B cell (primary cell): ENCODE measurements at regions of chr10 and their contacts with region 1.

Region 1: DNA sequence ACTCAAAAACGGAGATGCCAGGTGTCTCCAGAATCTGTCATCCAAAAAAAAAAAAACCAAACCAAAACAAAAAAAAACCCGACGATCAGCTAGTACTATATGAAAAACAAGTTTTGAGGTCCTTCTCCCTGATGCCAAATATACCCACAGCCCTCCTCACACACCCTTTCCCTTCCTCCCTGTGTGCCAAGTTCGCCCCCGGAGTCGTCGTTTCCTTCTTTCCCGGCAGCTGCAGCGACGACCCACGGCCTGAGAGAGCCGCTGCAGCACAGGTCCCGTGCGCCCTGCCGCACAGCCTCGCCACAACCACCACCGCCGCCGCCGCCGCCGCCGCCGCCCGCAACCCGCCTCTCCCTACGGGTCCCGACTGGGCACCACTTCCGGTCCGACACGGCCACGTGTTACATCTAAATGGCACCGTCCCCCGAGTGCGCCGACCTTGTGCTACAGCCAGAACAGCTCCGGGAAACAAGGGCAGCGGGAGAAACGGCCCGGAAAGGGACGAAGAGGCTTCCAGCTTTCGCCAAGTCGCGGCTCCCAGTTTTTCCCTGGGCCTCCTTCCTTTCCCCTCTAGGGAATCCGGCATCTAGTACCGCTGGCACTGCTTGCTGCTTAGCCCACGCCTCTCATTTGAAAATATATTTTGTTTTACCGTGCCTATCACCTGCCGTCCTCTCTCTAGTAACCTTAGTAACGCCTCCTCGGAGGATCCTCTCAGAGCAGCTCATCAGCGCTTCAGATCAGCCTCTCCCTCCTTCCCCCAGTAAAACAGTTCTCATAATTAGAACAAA is at the start of gene FRA10AC1:
- DNase-seq: peak; percentile 95
- ATAC-seq: peak; percentile 86
- H3K4me3 ChIP-seq: peak within 1 kb of the TSS; percentile 79 to 98 (median 91)
- H3K4me3 Mint-ChIP-seq: no peak within 1 kb of the TSS
- H3K27ac ChIP-seq: peak within 1 kb of the TSS; percentile 64 to 92
- H3K27ac Mint-ChIP-seq: no peak within 1 kb of the TSS
- H3K4me1 ChIP-seq: peaks cover 11% of the 10 kb centered on the region in 2 donors
- H3K4me1 Mint-ChIP-seq: peaks cover 9% of the 10 kb centered on the region
- H3K27me3 ChIP-seq: no peaks in the 10 kb centered on the region
- H3K27me3 Mint-ChIP-seq: no peaks in the 10 kb centered on the region
- CTCF ChIP-seq: no peak
- total RNA-seq, gene FRA10AC1: 29.7 and 31.2 TPM in 2 replicates

Region 2: DNA sequence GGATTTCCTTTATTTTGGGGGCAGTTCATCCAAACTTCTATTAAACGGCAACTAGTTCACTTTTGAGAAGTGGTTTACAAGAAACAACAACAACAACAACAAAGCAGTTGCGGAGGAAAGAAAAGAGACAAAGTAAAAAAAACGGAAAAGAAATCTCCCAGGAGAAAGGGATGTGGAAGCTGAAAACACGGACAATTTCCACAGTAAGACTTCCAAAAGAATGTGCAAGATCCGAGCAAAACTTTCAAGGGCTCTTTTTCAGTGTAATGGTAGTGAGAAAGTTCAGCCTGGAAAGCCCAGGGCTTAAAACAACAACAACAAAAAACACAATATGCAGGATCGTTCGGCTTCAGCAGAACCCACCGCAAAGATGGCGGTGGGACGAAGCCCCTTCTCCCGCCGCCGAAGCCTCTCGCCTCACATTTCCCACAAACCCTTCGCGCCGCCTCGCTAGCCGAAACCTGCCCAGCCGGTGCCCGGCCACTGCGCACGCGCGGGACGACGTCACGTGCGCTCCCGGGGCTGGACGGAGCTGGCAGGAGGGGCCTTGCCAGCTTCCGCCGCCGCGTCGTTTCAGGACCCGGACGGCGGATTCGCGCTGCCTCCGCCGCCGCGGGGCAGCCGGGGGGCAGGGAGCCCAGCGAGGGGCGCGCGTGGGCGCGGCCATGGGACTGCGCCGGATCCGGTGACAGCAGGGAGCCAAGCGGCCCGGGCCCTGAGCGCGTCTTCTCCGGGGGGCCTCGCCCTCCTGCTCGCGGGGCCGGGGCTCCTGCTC is 1904.3 kb before region 1 on chr10 and contains the start of gene TNKS2:
- CTCF ChIA-PET with region 1: no interaction called
- POLR2A ChIA-PET with region 1: no interaction called
- intact Hi-C with region 1: loop called (anchors 5 kb)
- DNase-seq: peak; percentile 96
- ATAC-seq: peak; percentile 75
- H3K4me3 ChIP-seq: peak within 1 kb of the TSS; percentile 77 to 91 (median 83)
- H3K4me3 Mint-ChIP-seq: peak within 1 kb of the TSS; percentile 97
- H3K27ac ChIP-seq: peak within 1 kb of the TSS; percentile 91 to 97
- H3K27ac Mint-ChIP-seq: peak within 1 kb of the TSS; percentile 99
- H3K4me1 ChIP-seq: peaks cover 34 to 36% of the 10 kb centered on the region in 2 donors
- H3K4me1 Mint-ChIP-seq: peaks cover 62% of the 10 kb centered on the region
- H3K27me3 ChIP-seq: no peaks in the 10 kb centered on the region
- H3K27me3 Mint-ChIP-seq: no peaks in the 10 kb centered on the region
- CTCF ChIP-seq: no peak
- total RNA-seq, gene TNKS2: 45.8 and 48.1 TPM in 2 replicates

Region 3: DNA sequence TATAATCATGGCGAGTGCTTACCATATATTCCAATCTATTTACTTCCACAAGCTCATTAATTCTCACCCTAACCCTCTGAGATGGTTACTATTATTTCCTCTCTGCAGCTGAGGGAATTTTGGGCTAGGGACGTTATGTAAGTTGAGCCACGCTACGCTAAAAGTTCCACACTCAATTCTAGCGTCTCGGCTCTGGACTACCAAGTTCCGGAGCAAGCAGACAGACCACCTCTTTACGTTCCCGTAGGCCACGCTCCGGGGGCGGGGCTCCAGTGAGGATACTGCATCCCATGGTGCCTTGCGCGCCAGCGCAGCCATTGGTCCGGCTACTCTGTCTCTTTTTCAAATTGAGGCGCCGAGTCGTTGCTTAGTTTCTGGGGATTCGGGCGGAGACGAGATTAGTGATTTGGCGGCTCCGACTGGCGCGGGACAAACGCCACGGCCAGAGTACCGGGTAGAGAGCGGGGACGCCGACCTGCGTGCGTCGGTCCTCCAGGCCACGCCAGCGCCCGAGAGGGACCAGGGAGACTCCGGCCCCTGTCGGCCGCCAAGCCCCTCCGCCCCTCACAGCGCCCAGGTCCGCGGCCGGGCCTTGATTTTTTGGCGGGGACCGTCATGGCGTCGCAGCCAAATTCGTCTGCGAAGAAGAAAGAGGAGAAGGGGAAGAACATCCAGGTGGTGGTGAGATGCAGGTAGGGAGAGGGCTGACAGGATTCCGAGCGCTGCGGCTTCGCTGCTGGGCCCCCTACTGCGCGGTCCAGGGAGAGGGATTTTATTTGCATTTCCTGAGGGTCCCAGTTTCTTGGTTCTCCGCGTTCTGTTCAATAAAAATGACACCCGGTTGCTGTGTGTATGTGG is 1109.4 kb before region 1 on chr10 and contains the start of gene KIF11:
- CTCF ChIA-PET with region 1: no interaction called
- POLR2A ChIA-PET with region 1: no interaction called
- intact Hi-C with region 1: loop called (anchors 5 kb)
- DNase-seq: peak; percentile 96
- ATAC-seq: peak; percentile 82
- H3K4me3 ChIP-seq: peak within 1 kb of the TSS; percentile 65 to 95 (median 84)
- H3K4me3 Mint-ChIP-seq: peak within 1 kb of the TSS; percentile 99
- H3K27ac ChIP-seq: peak within 1 kb of the TSS; percentile 82 to 92
- H3K27ac Mint-ChIP-seq: peak within 1 kb of the TSS; percentile 99
- H3K4me1 ChIP-seq: peaks cover 9 to 22% of the 10 kb centered on the region in 2 donors
- H3K4me1 Mint-ChIP-seq: peaks cover 41% of the 10 kb centered on the region
- H3K27me3 ChIP-seq: no peaks in the 10 kb centered on the region
- H3K27me3 Mint-ChIP-seq: no peaks in the 10 kb centered on the region
- CTCF ChIP-seq: no peak
- total RNA-seq, gene KIF11: 1.8 and 2.0 TPM in 2 replicates

Region 4: GRCh38 chr10:93745408-93746065 is 43.1 kb after region 1 on chr10:
- CTCF ChIA-PET with region 1: interaction called, 11 read pairs
- POLR2A ChIA-PET with region 1: interaction called, 3 read pairs
- intact Hi-C with region 1: loop called (anchors 2 kb)
- DNase-seq: no peak
- ATAC-seq: no peak
- H3K4me3 ChIP-seq: no peak overlapping the region
- H3K4me3 Mint-ChIP-seq: no peak overlapping the region
- H3K27ac ChIP-seq: no peak overlapping the region
- H3K27ac Mint-ChIP-seq: no peak overlapping the region
- H3K4me1 ChIP-seq: peaks cover 8 to 18% of the 10 kb centered on the region in 2 donors
- H3K4me1 Mint-ChIP-seq: peaks cover 21% of the 10 kb centered on the region
- H3K27me3 ChIP-seq: no peaks in the 10 kb centered on the region
- H3K27me3 Mint-ChIP-seq: peaks cover 4% of the 10 kb centered on the region
- CTCF ChIP-seq: no peak

Region 5: GRCh38 chr10:93816123-93816747 is 113.8 kb after region 1 on chr10:
- CTCF ChIA-PET with region 1: interaction called, 40 read pairs
- POLR2A ChIA-PET with region 1: interaction called, 4 read pairs
- intact Hi-C with region 1: loop called (anchors 1 kb)
- DNase-seq: peak; percentile 51
- ATAC-seq: no peak
- H3K4me3 ChIP-seq: no peak overlapping the region
- H3K4me3 Mint-ChIP-seq: no peak overlapping the region
- H3K27ac ChIP-seq: no peak overlapping the region
- H3K27ac Mint-ChIP-seq: no peak overlapping the region
- H3K4me1 ChIP-seq: no peaks in the 10 kb centered on the region
- H3K4me1 Mint-ChIP-seq: no peaks in the 10 kb centered on the region
- H3K27me3 ChIP-seq: peaks cover 0 to 21% (median 5%) of the 10 kb centered on the region in 4 experiments
- H3K27me3 Mint-ChIP-seq: peaks cover 63% of the 10 kb centered on the region
- CTCF ChIP-seq: peak; percentile 67

Region 6: DNA sequence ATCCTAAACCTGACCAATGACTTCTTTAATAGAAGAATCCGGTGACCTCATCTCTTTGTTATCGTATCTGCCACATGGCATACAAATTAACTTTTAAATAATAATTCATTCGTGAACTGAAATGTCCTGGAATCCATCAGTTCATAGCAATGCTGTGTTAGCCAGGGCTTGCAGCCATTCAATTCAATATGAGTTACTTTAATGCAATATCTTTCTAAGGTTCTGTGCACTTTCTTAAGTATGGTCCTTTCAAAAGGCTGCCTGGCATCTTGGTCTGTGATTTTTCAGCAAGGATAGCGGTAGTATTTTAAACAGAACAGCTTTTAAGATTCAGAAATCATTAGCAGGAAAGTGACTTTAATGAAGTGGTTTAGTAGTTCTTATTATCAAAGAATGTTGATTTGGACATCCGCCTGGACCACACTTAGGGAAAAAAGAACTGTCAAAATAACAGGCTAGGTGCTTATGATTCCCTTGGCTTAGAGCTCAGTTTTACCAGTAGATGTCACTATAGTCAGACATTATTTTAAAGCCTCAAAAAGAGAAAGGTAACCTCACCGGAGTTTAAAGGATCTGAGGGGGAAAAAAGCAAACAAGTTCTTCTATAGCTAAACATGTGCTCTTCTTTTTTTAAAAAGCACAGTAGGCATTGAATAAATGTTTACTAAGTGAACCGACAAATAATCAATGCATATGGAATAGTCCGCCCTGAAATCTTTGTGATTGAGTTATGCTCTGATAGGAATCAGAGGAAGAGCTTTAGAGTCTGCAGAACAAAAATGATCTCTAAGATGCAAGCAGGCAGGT is 214.1 kb after region 1 on chr10:
- CTCF ChIA-PET with region 1: no interaction called
- POLR2A ChIA-PET with region 1: no interaction called
- intact Hi-C with region 1: no loop called
- DNase-seq: no peak
- ATAC-seq: no peak
- H3K4me3 ChIP-seq: no peak overlapping the region
- H3K4me3 Mint-ChIP-seq: no peak overlapping the region
- H3K27ac ChIP-seq: no peak overlapping the region
- H3K27ac Mint-ChIP-seq: no peak overlapping the region
- H3K4me1 ChIP-seq: no peaks in the 10 kb centered on the region
- H3K4me1 Mint-ChIP-seq: no peaks in the 10 kb centered on the region
- H3K27me3 ChIP-seq: no peaks in the 10 kb centered on the region
- H3K27me3 Mint-ChIP-seq: no peaks in the 10 kb centered on the region
- CTCF ChIP-seq: peak; percentile 9

Region 7: GRCh38 chr10:94320285-94320914 is 618.0 kb after region 1 on chr10:
- CTCF ChIA-PET with region 1: interaction called, 12 read pairs
- POLR2A ChIA-PET with region 1: no interaction called
- intact Hi-C with region 1: no loop called
- DNase-seq: peak; percentile 65
- ATAC-seq: no peak
- H3K4me3 ChIP-seq: no peak overlapping the region
- H3K4me3 Mint-ChIP-seq: no peak overlapping the region
- H3K27ac ChIP-seq: no peak overlapping the region
- H3K27ac Mint-ChIP-seq: no peak overlapping the region
- H3K4me1 ChIP-seq: no peaks in the 10 kb centered on the region
- H3K4me1 Mint-ChIP-seq: no peaks in the 10 kb centered on the region
- H3K27me3 ChIP-seq: no peaks in the 10 kb centered on the region
- H3K27me3 Mint-ChIP-seq: no peaks in the 10 kb centered on the region
- CTCF ChIP-seq: peak; percentile 96

Region 8: GRCh38 chr10:94545391-94546048 is 843.1 kb after region 1 on chr10 and contains the start of gene HELLS:
- CTCF ChIA-PET with region 1: no interaction called
- POLR2A ChIA-PET with region 1: no interaction called
- intact Hi-C with region 1: loop called (anchors 10 kb)
- DNase-seq: peak; percentile 84
- ATAC-seq: peak; percentile 79
- H3K4me3 ChIP-seq: peak within 1 kb of the TSS; percentile 57 to 99 (median 95)
- H3K4me3 Mint-ChIP-seq: peak within 1 kb of the TSS; percentile 94
- H3K27ac ChIP-seq: peak within 1 kb of the TSS; percentile 50 to 71
- H3K27ac Mint-ChIP-seq: peak within 1 kb of the TSS; percentile 86
- H3K4me1 ChIP-seq: peaks cover 14 to 18% of the 10 kb centered on the region in 2 donors
- H3K4me1 Mint-ChIP-seq: peaks cover 22% of the 10 kb centered on the region
- H3K27me3 ChIP-seq: no peaks in the 10 kb centered on the region
- H3K27me3 Mint-ChIP-seq: no peaks in the 10 kb centered on the region
- CTCF ChIP-seq: no peak
- total RNA-seq, gene HELLS: 26.0 and 27.4 TPM in 2 replicates